ENCODE measurements at regions of chr5 and their contacts with region 1.

Region 1: GRCh38 chr5:143008809-143009521 is 238.8 kb downstream of the ARHGAP26 start:
- DNase-seq: peak in 8 of 9 donors; percentile 10 to 73 (median 36)
- ATAC-seq: peak; percentile 91
- H3K4me3 ChIP-seq: no peak overlapping the region
- H3K4me3 Mint-ChIP-seq: peak overlapping the region in 4 of 10 donors; percentile 4 to 44 (median 27)
- H3K27ac ChIP-seq: no peak overlapping the region
- H3K27ac Mint-ChIP-seq: peak overlapping the region in 7 of 9 donors; percentile 45 to 86 (median 71)
- H3K4me1 ChIP-seq: peaks cover 12 to 43% of the 10 kb centered on the region in 2 donors
- H3K4me1 Mint-ChIP-seq: peaks cover 27 to 74% (median 32%) of the 10 kb centered on the region in 7 donors
- H3K27me3 ChIP-seq: no peaks in the 10 kb centered on the region
- H3K27me3 Mint-ChIP-seq: no peaks in the 10 kb centered on the region

Region 2: DNA sequence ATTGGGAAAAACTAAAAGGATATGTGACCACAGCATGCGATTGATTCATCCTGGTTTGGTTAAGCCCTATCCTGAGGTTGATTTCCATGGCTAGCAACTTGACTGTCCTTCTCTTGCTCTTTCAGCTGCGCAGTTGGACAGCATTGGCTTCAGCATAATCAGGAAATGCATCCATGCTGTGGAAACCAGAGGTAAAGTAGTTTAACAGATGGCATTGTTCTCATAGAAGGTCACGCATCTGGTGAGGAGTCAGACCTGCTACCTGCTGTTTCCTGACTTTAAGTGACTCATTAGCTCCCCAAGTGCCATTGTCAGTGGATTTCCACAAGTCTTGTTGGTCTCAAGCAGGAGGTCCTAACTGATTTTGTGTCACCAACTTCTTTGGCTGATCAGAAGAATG is 28.1 kb after region 1 on chr5:
- CTCF ChIA-PET with region 1: no interaction called
- POLR2A ChIA-PET with region 1: no interaction called
- intact Hi-C with region 1: loop called in 1 of 2 experiments (anchors 2 kb)
- DNase-seq: no peak
- ATAC-seq: no peak
- H3K4me3 ChIP-seq: no peak overlapping the region
- H3K4me3 Mint-ChIP-seq: no peak overlapping the region
- H3K27ac ChIP-seq: no peak overlapping the region
- H3K27ac Mint-ChIP-seq: no peak overlapping the region
- H3K4me1 ChIP-seq: no peaks in the 10 kb centered on the region
- H3K4me1 Mint-ChIP-seq: peaks cover 0 to 39% (median 0%) of the 10 kb centered on the region in 7 donors
- H3K27me3 ChIP-seq: no peaks in the 10 kb centered on the region
- H3K27me3 Mint-ChIP-seq: no peaks in the 10 kb centered on the region

Region 3: GRCh38 chr5:143051244-143052058 is 42.5 kb after region 1 on chr5:
- CTCF ChIA-PET with region 1: no interaction called
- POLR2A ChIA-PET with region 1: no interaction called
- intact Hi-C with region 1: loop called in 1 of 2 experiments (anchors 2 kb)
- DNase-seq: no peak
- ATAC-seq: peak; percentile 45
- H3K4me3 ChIP-seq: no peak overlapping the region
- H3K4me3 Mint-ChIP-seq: no peak overlapping the region
- H3K27ac ChIP-seq: no peak overlapping the region
- H3K27ac Mint-ChIP-seq: peak overlapping the region in 2 of 9 donors; percentile 2 to 53
- H3K4me1 ChIP-seq: no peaks in the 10 kb centered on the region
- H3K4me1 Mint-ChIP-seq: peaks cover 5 to 61% (median 18%) of the 10 kb centered on the region in 7 donors
- H3K27me3 ChIP-seq: no peaks in the 10 kb centered on the region
- H3K27me3 Mint-ChIP-seq: no peaks in the 10 kb centered on the region

Region 4: GRCh38 chr5:143200781-143201398 is 191.9 kb after region 1 on chr5:
- CTCF ChIA-PET with region 1: no interaction called
- POLR2A ChIA-PET with region 1: no interaction called
- intact Hi-C with region 1: no loop called
- DNase-seq: no peak
- ATAC-seq: no peak
- H3K4me3 ChIP-seq: no peak overlapping the region
- H3K4me3 Mint-ChIP-seq: no peak overlapping the region
- H3K27ac ChIP-seq: no peak overlapping the region
- H3K27ac Mint-ChIP-seq: no peak overlapping the region
- H3K4me1 ChIP-seq: peaks cover 0 to 7% of the 10 kb centered on the region in 2 donors
- H3K4me1 Mint-ChIP-seq: peaks cover 0 to 8% (median 0%) of the 10 kb centered on the region in 7 donors
- H3K27me3 ChIP-seq: no peaks in the 10 kb centered on the region
- H3K27me3 Mint-ChIP-seq: no peaks in the 10 kb centered on the region

Region 5: DNA sequence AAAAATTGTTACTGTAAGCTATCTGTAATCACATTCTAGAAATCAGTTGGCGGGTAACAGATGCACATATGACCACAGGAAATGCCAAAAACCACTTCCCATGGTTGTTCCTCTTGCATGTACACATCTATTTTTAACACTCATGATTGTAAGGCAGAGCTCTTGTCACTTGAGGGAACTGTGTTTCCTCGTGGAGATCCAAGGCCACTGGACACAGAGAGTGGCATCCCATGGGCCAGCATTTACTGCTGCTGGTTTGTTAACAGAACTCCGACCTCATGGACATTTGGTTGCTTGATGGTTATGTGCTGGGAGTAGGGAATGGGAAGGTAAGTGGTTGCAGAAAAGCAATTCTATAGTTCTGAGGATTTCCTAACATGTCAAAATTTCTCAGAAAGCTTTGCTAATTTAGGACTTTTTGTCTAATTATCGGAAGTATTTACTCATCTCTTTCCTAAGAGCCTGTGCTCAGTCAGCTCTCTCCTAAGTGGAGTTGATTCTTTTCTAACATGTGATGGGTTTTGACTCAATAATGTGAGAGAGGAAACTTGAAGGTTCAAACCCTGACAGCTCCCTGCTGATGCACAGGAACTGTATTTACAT is 596.5 kb after region 1 on chr5:
- CTCF ChIA-PET with region 1: no interaction called
- POLR2A ChIA-PET with region 1: no interaction called
- intact Hi-C with region 1: loop called in 1 of 2 experiments (anchors 5 kb)
- DNase-seq: peak in 3 of 9 donors; percentile 12 to 16 (median 13)
- ATAC-seq: peak; percentile 69
- H3K4me3 ChIP-seq: no peak overlapping the region
- H3K4me3 Mint-ChIP-seq: peak overlapping the region in 2 of 10 donors; percentile 57 to 84
- H3K27ac ChIP-seq: no peak overlapping the region
- H3K27ac Mint-ChIP-seq: peak overlapping the region in 2 of 9 donors; percentile 51 to 93
- H3K4me1 ChIP-seq: peaks cover 6 to 22% of the 10 kb centered on the region in 2 donors
- H3K4me1 Mint-ChIP-seq: peaks cover 24 to 36% (median 27%) of the 10 kb centered on the region in 7 donors
- H3K27me3 ChIP-seq: no peaks in the 10 kb centered on the region
- H3K27me3 Mint-ChIP-seq: peaks cover 6 to 25% (median 18%) of the 10 kb centered on the region in 5 donors

Region 6: DNA sequence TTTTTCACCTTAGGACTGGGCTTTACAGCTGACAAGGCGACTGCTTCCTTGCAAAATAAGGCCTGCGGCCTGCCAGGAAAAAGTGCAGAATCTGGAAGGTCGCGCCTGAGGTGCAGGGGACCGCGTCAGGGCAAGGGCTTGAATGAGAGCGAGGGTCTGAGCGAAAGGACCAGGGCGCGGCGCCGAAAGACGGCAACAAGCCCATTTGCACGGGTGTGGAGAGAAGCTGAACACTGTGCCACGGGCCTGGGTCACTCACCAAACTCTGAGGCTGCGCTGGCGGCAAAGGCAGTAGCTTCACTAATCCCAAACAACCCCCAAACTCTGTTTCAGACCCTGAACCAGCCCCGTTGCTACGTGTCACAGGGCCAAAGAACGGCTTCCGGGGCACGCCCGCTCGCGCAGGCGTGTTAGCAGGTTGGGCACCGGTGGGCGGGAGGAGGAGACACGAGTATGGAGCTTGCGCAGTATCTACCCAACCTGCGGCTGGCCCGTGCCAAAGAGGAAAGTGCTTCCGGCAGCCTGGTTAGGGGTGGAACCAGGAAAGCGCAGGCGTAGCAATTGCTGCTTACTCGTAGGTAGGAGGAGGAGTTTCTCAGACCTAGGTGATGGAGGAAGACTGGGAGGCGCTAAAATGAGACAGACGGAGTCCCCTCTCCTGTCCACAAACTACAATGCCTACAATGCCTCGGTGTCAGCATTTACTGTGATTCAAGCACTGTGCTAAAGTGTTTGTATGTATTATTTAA is 1161.5 kb after region 1 on chr5 and contains the starts of genes KCTD16 and YIPF5:
- CTCF ChIA-PET with region 1: no interaction called
- POLR2A ChIA-PET with region 1: no interaction called
- intact Hi-C with region 1: loop called in 1 of 2 experiments (anchors 1 kb)
- DNase-seq: peak; percentile 90 to 98 (median 98)
- ATAC-seq: peak; percentile 98
- H3K4me3 ChIP-seq: peak within 1 kb of the TSS; percentile 79
- H3K4me3 Mint-ChIP-seq: peak within 1 kb of the TSS; percentile 90 to 99 (median 94)
- H3K27ac ChIP-seq: peak within 1 kb of the TSS; percentile 91
- H3K27ac Mint-ChIP-seq: peak within 1 kb of the TSS; percentile 85 to 96 (median 95)
- H3K4me1 ChIP-seq: peaks cover 15 to 19% of the 10 kb centered on the region in 2 donors
- H3K4me1 Mint-ChIP-seq: peaks cover 19 to 56% (median 52%) of the 10 kb centered on the region in 7 donors
- H3K27me3 ChIP-seq: no peaks in the 10 kb centered on the region
- H3K27me3 Mint-ChIP-seq: peaks cover 0 to 29% (median 0%) of the 10 kb centered on the region in 5 donors
- total RNA-seq, gene KCTD16: 0.07 to 0.22 TPM in 2 of 5 experiments, not detected in the others
- total RNA-seq, gene YIPF5: 27.0 to 49.2 (median 38.6) TPM